ENCODE measurements at regions of chr7 and their contacts with region 1.

Region 1: DNA sequence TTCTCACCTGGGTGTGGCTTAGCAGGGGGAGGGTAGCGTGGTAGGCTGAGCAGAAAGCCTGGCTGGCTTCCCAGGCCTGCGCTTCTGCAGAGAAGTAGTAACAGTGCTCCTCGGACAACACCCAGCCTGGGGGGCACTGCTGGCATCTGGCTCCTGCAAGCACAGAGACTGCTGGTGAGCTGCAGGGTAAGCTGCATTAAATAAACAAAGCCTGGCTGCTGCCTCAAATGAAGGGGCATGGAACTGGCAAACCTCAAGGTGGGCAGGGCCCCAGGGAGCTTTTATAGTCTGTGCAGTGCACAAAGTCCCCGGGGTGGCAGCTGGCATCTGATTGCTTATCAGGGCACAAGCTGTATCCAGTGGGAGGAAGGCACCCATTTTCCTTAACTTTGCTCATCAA is 3.9 kb downstream of the KLRG2 start:
- DNase-seq: no peak
- H3K4me3 Mint-ChIP-seq: no peak overlapping the region
- H3K27ac Mint-ChIP-seq: no peak overlapping the region
- H3K4me1 Mint-ChIP-seq: no peaks in the 10 kb centered on the region
- H3K27me3 Mint-ChIP-seq: no peaks in the 10 kb centered on the region
- CTCF ChIP-seq: no peak

Region 2: DNA sequence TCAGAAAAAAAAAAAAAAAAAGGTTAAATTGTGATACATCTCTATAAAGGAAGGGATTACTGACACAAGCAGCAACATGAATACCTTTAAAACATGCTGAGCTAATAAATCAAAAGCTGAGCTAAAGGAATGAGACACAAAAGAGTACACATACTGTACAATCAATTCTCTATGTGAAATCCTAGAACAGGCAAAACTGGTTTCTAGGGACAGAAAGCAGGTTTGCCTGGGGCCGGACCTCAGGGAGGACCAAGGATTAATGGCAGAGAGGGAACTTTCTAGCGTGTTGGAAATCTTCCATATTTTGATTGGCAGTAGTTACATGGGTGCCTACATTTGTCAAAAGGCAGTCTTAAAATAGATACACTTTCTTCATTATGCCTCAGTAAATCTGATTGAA is 48.6 kb before region 1 on chr7:
- CTCF ChIA-PET with region 1: interaction called, 6 read pairs
- intact Hi-C with region 1: loop called (anchors 5 kb)
- DNase-seq: peak; percentile 69
- H3K4me3 Mint-ChIP-seq: no peak overlapping the region
- H3K27ac Mint-ChIP-seq: no peak overlapping the region
- H3K4me1 Mint-ChIP-seq: peaks cover 8% of the 10 kb centered on the region
- H3K27me3 Mint-ChIP-seq: no peaks in the 10 kb centered on the region
- CTCF ChIP-seq: no peak

Measured in Calu3 (cell line).